ENCODE measurements at regions of chr7 and their contacts with region 1.

Region 1: GRCh38 chr7:21542891-21543527 is at the start of gene DNAH11:
- DNase-seq: peak; percentile 21
- H3K4me3 Mint-ChIP-seq: peak within 1 kb of the TSS; percentile 81
- H3K27ac Mint-ChIP-seq: peak within 1 kb of the TSS; percentile 44
- H3K4me1 Mint-ChIP-seq: peaks cover 22% of the 10 kb centered on the region
- H3K27me3 Mint-ChIP-seq: peaks cover 41% of the 10 kb centered on the region
- total RNA-seq, gene DNAH11: 1.3 and 1.7 TPM in 2 replicates

Region 2: DNA sequence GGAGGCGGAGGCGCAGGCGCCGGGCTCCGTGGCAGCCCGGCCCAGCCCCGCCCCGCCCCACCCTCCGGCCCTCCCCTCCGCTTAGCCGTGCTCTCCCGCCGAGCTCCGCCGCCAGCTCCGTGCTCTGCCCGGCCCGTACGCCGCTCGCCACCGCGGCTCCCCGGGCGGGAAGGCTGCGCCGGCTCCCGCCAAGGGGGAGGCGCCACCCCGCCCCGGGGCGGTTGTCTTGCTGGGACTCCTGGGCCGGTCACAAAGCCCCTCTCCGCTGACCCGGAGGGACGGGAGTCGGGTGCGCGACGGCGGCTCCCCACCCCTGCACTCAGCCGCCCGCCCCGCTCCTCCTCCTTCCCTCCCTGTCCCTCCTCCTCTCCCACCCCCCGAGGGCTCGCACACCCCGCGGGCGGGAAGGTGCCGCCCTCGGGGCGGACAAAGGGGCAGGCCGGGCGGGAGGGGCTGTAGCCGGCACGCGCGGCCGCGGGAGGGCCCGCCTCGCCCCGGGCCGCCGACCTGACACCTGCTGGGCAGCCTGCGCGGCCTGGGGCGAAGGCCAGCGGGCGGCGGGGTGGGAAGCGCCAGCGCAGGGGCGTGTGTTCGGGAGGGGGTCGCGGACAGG is 744.8 kb before region 1 on chr7:
- intact Hi-C with region 1: loop called (anchors 10 kb)
- DNase-seq: no peak
- H3K4me3 Mint-ChIP-seq: no peak overlapping the region
- H3K27ac Mint-ChIP-seq: no peak overlapping the region
- H3K4me1 Mint-ChIP-seq: peaks cover 11% of the 10 kb centered on the region
- H3K27me3 Mint-ChIP-seq: peaks cover 57% of the 10 kb centered on the region

Region 3: DNA sequence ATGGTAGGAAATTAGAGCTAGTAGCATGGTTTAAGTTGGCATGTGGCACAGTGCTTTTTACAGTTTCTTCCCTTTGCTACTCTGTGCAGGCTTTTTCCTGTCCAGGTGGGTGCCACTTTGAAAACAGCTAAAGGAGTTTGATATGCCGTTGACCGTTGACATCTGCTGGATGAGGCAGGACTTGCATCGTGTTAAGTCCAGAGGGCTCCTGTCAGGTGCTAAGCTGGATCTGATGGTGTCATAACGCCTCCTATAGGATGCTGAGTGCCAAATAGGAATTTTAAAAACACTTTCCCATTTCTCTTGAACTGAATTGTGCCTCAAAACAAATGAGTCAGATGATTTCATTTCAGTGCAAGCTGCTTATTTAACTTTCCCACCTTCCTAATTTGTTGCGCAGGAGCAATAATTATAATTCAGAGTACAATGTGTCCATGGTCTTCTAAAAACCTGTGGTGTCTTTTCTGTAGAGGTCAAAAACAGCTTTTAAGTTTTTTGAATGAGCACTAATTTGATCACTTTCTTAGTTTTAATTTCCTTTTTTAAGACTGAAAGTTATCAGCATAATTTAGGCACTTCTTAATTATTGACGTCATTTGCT is 224.4 kb after region 1 on chr7:
- intact Hi-C with region 1: loop called (anchors 10 kb)
- DNase-seq: peak; percentile 4
- H3K4me3 Mint-ChIP-seq: no peak overlapping the region
- H3K27ac Mint-ChIP-seq: no peak overlapping the region
- H3K4me1 Mint-ChIP-seq: peaks cover 11% of the 10 kb centered on the region
- H3K27me3 Mint-ChIP-seq: peaks cover 7% of the 10 kb centered on the region